HEK293 (cell line): ENCODE measurements at regions of chr12 and their contacts with region 1.

Region 1: GRCh38 chr12:92987362-92987761 is 58.3 kb upstream of the EEA1 start:
- H3K4me3 ChIP-seq: no peak overlapping the region
- H3K27ac ChIP-seq: no peak overlapping the region
- H3K4me1 ChIP-seq: no peaks in the 10 kb centered on the region; the same call in 1 of the 2 replicates
- CTCF ChIP-seq: peak; percentile 54; the same call in 1 of the 2 replicates

Region 2: GRCh38 chr12:92810370-92810769 is 177.0 kb before region 1 on chr12:
- CTCF ChIA-PET with region 1: no interaction called
- POLR2A ChIA-PET with region 1: no interaction called
- H3K4me3 ChIP-seq: no peak overlapping the region
- H3K27ac ChIP-seq: no peak overlapping the region
- H3K4me1 ChIP-seq: no peaks in the 10 kb centered on the region
- CTCF ChIP-seq: no peak

Region 3: GRCh38 chr12:92977326-92977725 is 10.0 kb before region 1 on chr12:
- CTCF ChIA-PET with region 1: interaction called, 12 read pairs
- POLR2A ChIA-PET with region 1: no interaction called
- H3K4me3 ChIP-seq: no peak overlapping the region
- H3K27ac ChIP-seq: no peak overlapping the region
- H3K4me1 ChIP-seq: no peaks in the 10 kb centered on the region
- CTCF ChIP-seq: no peak

Region 4: GRCh38 chr12:93008044-93008778 is 20.8 kb after region 1 on chr12:
- CTCF ChIA-PET with region 1: interaction called, 12 read pairs
- POLR2A ChIA-PET with region 1: no interaction called
- H3K4me3 ChIP-seq: no peak overlapping the region
- H3K27ac ChIP-seq: no peak overlapping the region
- H3K4me1 ChIP-seq: peaks cover 14% of the 10 kb centered on the region
- CTCF ChIP-seq: no peak

Region 5: DNA sequence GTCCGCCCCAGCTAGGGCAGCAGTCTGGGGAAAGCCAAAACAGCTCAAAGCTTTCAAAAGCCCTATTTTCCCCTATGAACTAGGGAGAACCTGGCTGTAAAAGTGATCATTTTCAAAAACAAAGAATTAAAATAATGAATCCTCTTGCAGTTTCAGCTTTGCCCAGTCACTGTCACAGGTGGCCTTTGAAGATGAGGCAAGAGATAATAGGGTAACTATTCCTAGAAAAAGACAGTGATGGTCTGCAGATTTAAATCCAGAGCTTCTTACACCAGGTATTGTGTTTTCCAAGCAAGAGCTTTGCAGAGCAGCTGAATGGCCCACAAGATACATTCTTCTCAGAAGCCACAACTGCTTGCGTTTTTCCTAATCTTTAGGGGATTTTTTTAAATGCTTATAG is 310.2 kb after region 1 on chr12:
- CTCF ChIA-PET with region 1: interaction called, 17 read pairs
- POLR2A ChIA-PET with region 1: no interaction called
- H3K4me3 ChIP-seq: no peak overlapping the region
- H3K27ac ChIP-seq: no peak overlapping the region
- H3K4me1 ChIP-seq: no peaks in the 10 kb centered on the region
- CTCF ChIP-seq: no peak

Region 6: GRCh38 chr12:93397412-93397811 is 410.1 kb after region 1 on chr12:
- CTCF ChIA-PET with region 1: interaction called, 71 read pairs
- POLR2A ChIA-PET with region 1: no interaction called
- H3K4me3 ChIP-seq: no peak overlapping the region
- H3K27ac ChIP-seq: no peak overlapping the region
- H3K4me1 ChIP-seq: no peaks in the 10 kb centered on the region
- CTCF ChIP-seq: no peak